Activated T-helper 1 cell treated with anti-CD3 and anti-CD28 coated beads, Interleukin-12 subunit alpha, Interleukin-12 subunit beta, Interleukin-2, Interleukin-4 antibody, amounts not matched to agents 30 ng/mL and 10 ng/mL and 1 ng/mL, durations not matched to agents 14 hours and 24 hours and 36 hours (primary cell): ENCODE measurements at regions of chr13 and their contacts with region 1.

Region 1: DNA sequence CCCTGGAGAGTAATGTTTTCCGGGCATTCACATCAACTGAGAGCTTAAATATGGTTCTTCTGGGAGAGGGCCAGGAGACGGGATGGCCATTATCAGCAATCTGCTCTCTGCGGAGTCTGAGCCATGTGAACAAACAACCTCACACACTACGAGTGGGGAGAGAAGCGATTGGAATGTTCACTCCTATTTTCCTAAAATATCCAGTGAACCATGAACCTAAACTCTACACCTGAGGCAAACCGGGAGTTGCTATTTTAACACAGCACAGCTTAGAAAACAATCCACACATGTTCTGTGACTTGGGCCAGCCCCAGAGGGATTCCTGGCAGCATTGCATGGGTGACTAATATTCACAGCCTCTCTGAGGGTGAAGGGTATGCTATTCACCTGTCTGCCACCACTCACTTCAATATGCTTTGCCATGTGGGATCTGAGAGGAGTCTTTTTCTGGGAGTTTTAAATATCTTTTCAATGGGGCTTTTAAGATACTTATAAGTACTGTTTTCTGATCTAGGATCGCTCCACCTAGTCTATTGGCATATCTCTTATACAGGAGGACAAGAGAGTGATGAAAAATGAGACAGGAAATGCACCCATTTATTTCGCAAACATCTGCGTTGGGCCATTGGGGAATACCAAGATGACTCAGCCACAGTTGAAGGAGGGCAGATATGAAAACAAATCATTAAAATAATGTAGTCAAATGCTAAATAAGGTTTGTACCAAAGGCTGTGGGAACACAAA is 72.6 kb upstream of the SERP2 start:
- DNase-seq: no peak
- H3K4me3 Mint-ChIP-seq: peak overlapping the region; percentile 5
- H3K27ac Mint-ChIP-seq: peak overlapping the region; percentile 27
- H3K4me1 Mint-ChIP-seq: peaks cover 51% of the 10 kb centered on the region
- H3K27me3 Mint-ChIP-seq: peaks cover 3% of the 10 kb centered on the region

Region 2: DNA sequence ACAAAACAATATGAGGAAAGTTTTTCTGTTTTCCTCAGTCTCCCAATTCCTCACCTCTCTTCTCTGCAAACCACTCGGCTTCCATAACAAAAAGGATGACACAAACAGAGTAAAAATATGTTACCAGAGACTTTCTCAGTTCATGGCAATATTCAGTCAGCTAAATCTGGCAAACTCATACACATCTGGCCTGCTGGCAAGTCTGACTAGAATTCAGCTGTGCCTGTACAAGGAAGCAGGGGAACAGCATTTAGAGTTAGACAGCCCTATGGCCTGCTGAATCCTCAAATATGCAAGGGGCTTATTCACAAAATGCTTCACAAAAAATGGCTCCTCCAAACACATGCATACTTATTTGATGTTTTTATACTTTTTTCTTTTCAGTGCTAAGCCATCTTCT is 742.1 kb before region 1 on chr13:
- intact Hi-C with region 1: no loop called
- DNase-seq: no peak
- H3K4me3 Mint-ChIP-seq: no peak overlapping the region
- H3K27ac Mint-ChIP-seq: no peak overlapping the region
- H3K4me1 Mint-ChIP-seq: no peaks in the 10 kb centered on the region
- H3K27me3 Mint-ChIP-seq: peaks cover 8% of the 10 kb centered on the region

Region 3: DNA sequence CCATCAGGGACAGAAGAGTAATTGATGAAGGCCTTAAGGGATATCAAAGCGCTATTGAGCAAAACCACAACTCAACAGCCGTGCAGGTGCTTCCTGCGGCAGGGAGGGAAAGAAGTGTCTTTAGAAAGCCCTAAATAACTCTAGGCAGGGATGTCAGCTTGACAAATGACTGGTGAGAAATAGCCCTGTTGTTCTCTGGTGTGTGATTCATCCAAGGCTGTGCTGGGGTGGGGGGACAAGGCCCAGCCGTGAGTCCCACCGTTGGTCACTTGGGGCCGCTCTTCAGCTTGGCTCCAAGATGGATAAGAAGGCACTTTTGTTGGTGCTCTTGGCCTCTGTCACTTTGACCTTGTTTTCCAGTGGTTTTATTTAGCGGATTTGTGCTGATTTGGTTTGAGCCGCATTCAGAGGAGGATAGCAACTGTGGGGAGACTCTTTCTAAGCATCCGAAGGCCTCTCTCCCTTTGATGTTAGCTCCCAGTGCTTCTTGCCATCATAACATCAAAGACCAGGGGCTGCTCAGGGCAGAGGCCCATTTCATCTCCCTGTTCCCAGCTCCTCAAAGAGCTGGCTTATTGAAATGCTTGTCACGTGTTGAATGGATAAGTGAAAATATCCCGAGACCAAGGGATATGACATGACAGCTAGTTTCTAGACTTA is 57.7 kb before region 1 on chr13:
- intact Hi-C with region 1: no loop called
- DNase-seq: no peak
- H3K4me3 Mint-ChIP-seq: no peak overlapping the region
- H3K27ac Mint-ChIP-seq: no peak overlapping the region
- H3K4me1 Mint-ChIP-seq: peaks cover 8% of the 10 kb centered on the region
- H3K27me3 Mint-ChIP-seq: peaks cover 22% of the 10 kb centered on the region

Region 4: GRCh38 chr13:44312898-44313551 is 12.0 kb after region 1 on chr13:
- intact Hi-C with region 1: loop called (anchors 1 kb)
- DNase-seq: no peak
- H3K4me3 Mint-ChIP-seq: no peak overlapping the region
- H3K27ac Mint-ChIP-seq: no peak overlapping the region
- H3K4me1 Mint-ChIP-seq: no peaks in the 10 kb centered on the region
- H3K27me3 Mint-ChIP-seq: peaks cover 3% of the 10 kb centered on the region